HEK293 (cell line): ENCODE measurements at regions of chr17 and their contacts with region 1.

Region 1: GRCh38 chr17:29140051-29140621 is 40.1 kb downstream of the MYO18A start:
- H3K4me3 ChIP-seq: peak overlapping the region; percentile 2; the same call in 1 of the 2 replicates
- H3K27ac ChIP-seq: no peak overlapping the region; the same call in 1 of the 2 replicates
- H3K4me1 ChIP-seq: peaks cover 15% of the 10 kb centered on the region
- CTCF ChIP-seq: no peak

Region 2: GRCh38 chr17:29054835-29055234 is 85.3 kb before region 1 on chr17:
- CTCF ChIA-PET with region 1: no interaction called
- POLR2A ChIA-PET with region 1: no interaction called
- H3K4me3 ChIP-seq: no peak overlapping the region
- H3K27ac ChIP-seq: no peak overlapping the region
- H3K4me1 ChIP-seq: no peaks in the 10 kb centered on the region
- CTCF ChIP-seq: no peak

Region 3: GRCh38 chr17:29124117-29124924 is 15.8 kb before region 1 on chr17:
- CTCF ChIA-PET with region 1: interaction called, 506 read pairs
- POLR2A ChIA-PET with region 1: interaction called, 12 read pairs
- H3K4me3 ChIP-seq: no peak overlapping the region
- H3K27ac ChIP-seq: no peak overlapping the region
- H3K4me1 ChIP-seq: no peaks in the 10 kb centered on the region
- CTCF ChIP-seq: peak; percentile 69